T-cell (primary cell): ENCODE measurements at regions of chr9 and their contacts with region 1.

Region 1: GRCh38 chr9:137168905-137169856 is 670 bp downstream of the LRRC26 start:
- DNase-seq: peak in 2 of 35 experiments; percentile 15 to 17
- ATAC-seq: peak in 3 of 4 experiments; percentile 34 to 64 (median 51)
- H3K4me3 ChIP-seq: peak overlapping the region in 1 of 2 donors; percentile 38
- H3K4me3 Mint-ChIP-seq: peak overlapping the region in 2 of 3 donors; percentile 45 to 55
- H3K27ac ChIP-seq: no peak overlapping the region
- H3K27ac Mint-ChIP-seq: no peak overlapping the region
- H3K4me1 ChIP-seq: peaks cover 0 to 15% of the 10 kb centered on the region in 2 experiments
- H3K4me1 Mint-ChIP-seq: peaks cover 0 to 6% (median 0%) of the 10 kb centered on the region in 3 donors
- H3K27me3 ChIP-seq: peaks cover 6 to 94% of the 10 kb centered on the region in 2 experiments
- H3K27me3 Mint-ChIP-seq: peaks cover 9 to 43% of the 10 kb centered on the region in 2 donors

Region 2: GRCh38 chr9:137150617-137151457 is 18.3 kb before region 1 on chr9:
- CTCF ChIA-PET with region 1: no interaction called
- POLR2A ChIA-PET with region 1: interaction called in 1 of 2 experiments, 15 read pairs
- DNase-seq: peak in 1 of 35 experiments; percentile 61
- ATAC-seq: peak in 3 of 4 experiments; percentile 31 to 44 (median 38)
- H3K4me3 ChIP-seq: no peak overlapping the region
- H3K4me3 Mint-ChIP-seq: no peak overlapping the region
- H3K27ac ChIP-seq: no peak overlapping the region
- H3K27ac Mint-ChIP-seq: no peak overlapping the region
- H3K4me1 ChIP-seq: peaks cover 0 to 7% of the 10 kb centered on the region in 2 experiments
- H3K4me1 Mint-ChIP-seq: peaks cover 0 to 2% (median 0%) of the 10 kb centered on the region in 3 donors
- H3K27me3 ChIP-seq: peaks cover 0 to 59% of the 10 kb centered on the region in 2 experiments
- H3K27me3 Mint-ChIP-seq: peaks cover 9 to 18% of the 10 kb centered on the region in 2 donors